ENCODE measurements at regions of chr2 and their contacts with region 1.

Region 1: GRCh38 chr2:96760036-96760985 is at the start of gene CNNM4:
- DNase-seq: peak; percentile 61
- ATAC-seq: peak; percentile 86
- H3K4me3 ChIP-seq: peak within 1 kb of the TSS; percentile 91
- H3K27ac ChIP-seq: peak within 1 kb of the TSS; percentile 67
- H3K4me1 ChIP-seq: peaks cover 9% of the 10 kb centered on the region
- H3K27me3 ChIP-seq: no peaks in the 10 kb centered on the region
- CTCF ChIP-seq: peak in 1 of 3 experiments; percentile 45; a peak in 2 of 6 replicates
- EP300 ChIP-seq: no peak
- POLR2A ChIP-seq: peak; percentile 84
- RAD21 ChIP-seq: no peak
- polyA plus RNA-seq, gene CNNM4: 2.4 to 2.8 TPM

Region 2: DNA sequence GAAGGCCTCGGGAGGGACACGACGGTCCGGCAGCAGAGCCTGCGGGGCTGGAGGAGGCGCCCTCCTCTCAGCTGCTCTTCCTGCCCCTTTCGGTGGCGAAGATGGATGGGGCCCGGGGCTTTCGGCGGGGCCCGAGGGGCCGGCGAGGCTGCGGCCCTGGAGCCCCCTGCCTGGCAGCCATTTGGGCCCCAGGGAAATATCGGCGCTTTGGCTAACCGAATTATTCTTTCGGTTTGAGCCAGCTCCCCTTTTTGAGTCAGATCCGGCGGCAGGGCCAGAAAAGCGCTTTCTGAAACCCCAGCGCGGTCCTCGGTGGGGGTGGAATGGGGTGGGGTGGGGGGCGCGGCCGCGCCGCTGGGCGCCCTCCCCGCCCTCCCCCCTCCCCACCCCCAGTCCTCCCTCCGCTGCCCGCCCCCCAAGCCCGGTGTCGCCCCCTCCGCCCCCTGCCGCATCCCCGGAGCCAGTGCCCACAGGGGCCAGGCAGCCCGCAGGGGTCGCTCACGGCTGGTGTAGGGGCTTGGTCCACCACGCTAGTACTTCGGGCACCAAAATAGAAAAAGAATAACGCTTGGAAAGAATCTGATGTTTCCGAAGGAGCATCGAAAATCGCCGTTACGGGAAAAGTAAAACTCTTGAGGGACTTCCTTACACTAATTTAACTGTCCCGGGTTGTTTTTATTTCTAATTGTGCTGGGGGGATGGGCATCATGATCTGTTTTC is 232.9 kb before region 1 on chr2:
- CTCF ChIA-PET with region 1: interaction called, 6 read pairs
- POLR2A ChIA-PET with region 1: no interaction called
- RAD21 ChIA-PET with region 1: interaction called, 10 read pairs
- SMC1A ChIA-PET with region 1: no interaction called
- in situ Hi-C with region 1: no loop called
- intact Hi-C with region 1: loop called (anchors 10 kb)
- DNase-seq: no peak
- ATAC-seq: peak; percentile 67
- H3K4me3 ChIP-seq: peak overlapping the region; percentile 39
- H3K27ac ChIP-seq: peak overlapping the region; percentile 97
- H3K4me1 ChIP-seq: peaks cover 88% of the 10 kb centered on the region
- H3K27me3 ChIP-seq: no peaks in the 10 kb centered on the region
- CTCF ChIP-seq: peak in 2 of 3 experiments; percentile 28 to 32; a peak in 3 of 6 replicates
- EP300 ChIP-seq: peak; percentile 65 to 70; a peak in 3 of 4 replicates
- POLR2A ChIP-seq: peak; percentile 73
- RAD21 ChIP-seq: peak; percentile 34; the same call in 1 of the 2 replicates

Region 3: DNA sequence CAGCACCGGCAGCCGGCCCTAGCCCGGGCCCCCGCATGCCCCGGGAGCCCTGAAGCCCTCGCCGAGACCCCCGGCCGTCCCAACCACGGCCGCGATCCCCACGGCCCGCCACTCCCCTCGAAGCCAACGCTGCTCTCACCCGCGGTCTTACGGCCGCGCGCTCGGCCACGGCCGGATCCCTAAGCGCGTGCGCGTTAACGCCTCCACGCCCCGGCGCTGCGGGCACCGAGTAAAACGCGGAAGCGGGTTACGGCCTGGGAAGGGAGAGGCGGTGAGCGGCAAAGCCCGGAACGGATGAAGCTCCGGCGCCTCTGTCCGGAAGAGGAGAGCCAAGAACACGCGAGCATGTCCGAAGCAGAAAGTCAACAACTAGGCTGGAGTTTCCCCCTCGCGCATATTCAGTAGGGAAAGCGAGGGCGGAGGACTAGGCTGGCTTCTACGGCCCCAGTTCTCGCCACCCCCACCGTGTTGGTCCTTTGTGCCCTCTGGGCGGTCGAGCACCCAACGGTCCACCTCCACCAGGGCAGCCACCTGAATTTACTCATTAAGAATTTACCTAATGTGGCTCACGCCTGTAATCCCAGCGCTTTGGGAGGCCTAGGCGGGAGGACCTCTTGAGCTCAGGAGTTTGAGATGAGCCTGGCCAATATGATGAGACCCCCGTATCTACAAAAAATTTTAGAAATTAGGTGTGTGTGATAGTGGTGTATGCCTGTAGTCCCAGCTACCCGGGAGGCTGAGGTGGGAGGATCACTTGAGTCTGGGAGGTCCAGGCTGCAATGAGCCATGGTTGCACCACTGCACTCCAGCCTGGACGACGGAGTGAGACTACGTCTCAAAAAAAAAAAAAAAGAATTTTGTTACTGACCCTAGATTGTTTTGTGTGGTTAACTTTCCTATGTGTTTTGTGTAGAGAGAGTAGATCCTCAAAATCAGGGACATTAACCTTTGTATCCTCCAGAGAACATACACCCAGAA is 121.9 kb before region 1 on chr2 and contains the start of gene KANSL3:
- CTCF ChIA-PET with region 1: interaction called, 25 read pairs
- POLR2A ChIA-PET with region 1: interaction called, 10 read pairs
- RAD21 ChIA-PET with region 1: interaction called, 12 read pairs
- SMC1A ChIA-PET with region 1: interaction called, 10 read pairs
- in situ Hi-C with region 1: no loop called
- intact Hi-C with region 1: loop called (anchors 1 kb)
- DNase-seq: peak; percentile 64
- ATAC-seq: peak; percentile 76
- H3K4me3 ChIP-seq: peak within 1 kb of the TSS; percentile 89
- H3K27ac ChIP-seq: peak within 1 kb of the TSS; percentile 84
- H3K4me1 ChIP-seq: no peaks in the 10 kb centered on the region; the same call in 1 of the 2 replicates
- H3K27me3 ChIP-seq: no peaks in the 10 kb centered on the region
- CTCF ChIP-seq: no peak
- EP300 ChIP-seq: peak in 1 of 2 experiments; percentile 66; a peak in 1 of 4 replicates
- POLR2A ChIP-seq: peak; percentile 99
- RAD21 ChIP-seq: no peak
- polyA plus RNA-seq, gene KANSL3: 5.6 to 6.6 TPM

Region 4: DNA sequence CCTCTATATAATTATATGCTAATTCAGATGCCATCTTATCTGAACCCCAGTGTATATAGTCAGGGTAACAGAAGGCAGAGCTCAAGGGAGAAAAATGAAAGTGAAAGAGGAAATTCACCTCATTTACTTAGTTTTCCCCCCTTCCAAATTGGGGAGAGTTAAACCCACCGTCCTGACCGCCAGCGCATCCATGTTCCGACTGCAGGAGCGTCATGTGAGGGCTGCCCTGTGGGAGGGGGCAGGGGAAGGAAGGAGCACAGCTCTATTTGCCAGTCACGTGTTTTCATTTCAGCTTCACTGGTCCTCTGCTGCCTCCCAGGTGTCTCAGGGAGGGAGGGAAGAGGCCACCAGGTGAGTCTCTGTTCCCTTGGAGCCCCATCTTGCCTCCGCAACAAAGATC is 13.6 kb after region 1 on chr2:
- CTCF ChIA-PET with region 1: interaction called, 153 read pairs
- POLR2A ChIA-PET with region 1: interaction called, 88 read pairs
- RAD21 ChIA-PET with region 1: interaction called, 92 read pairs
- SMC1A ChIA-PET with region 1: interaction called, 100 read pairs
- in situ Hi-C with region 1: no loop called
- intact Hi-C with region 1: loop called (anchors 2 kb)
- DNase-seq: no peak
- ATAC-seq: peak; percentile 66
- H3K4me3 ChIP-seq: peak overlapping the region; percentile 54
- H3K27ac ChIP-seq: peak overlapping the region; percentile 71
- H3K4me1 ChIP-seq: peaks cover 52% of the 10 kb centered on the region
- H3K27me3 ChIP-seq: no peaks in the 10 kb centered on the region
- CTCF ChIP-seq: no peak; a peak in 1 of 6 replicates
- EP300 ChIP-seq: no peak
- POLR2A ChIP-seq: peak; percentile 25; the same call in 1 of the 2 replicates
- RAD21 ChIP-seq: no peak

Region 5: GRCh38 chr2:96801005-96801785 is 40.9 kb after region 1 on chr2:
- CTCF ChIA-PET with region 1: interaction called, 42 read pairs
- POLR2A ChIA-PET with region 1: interaction called, 3 read pairs
- RAD21 ChIA-PET with region 1: interaction called, 15 read pairs
- SMC1A ChIA-PET with region 1: interaction called, 16 read pairs
- in situ Hi-C with region 1: no loop called
- intact Hi-C with region 1: loop called (anchors 2 kb)
- DNase-seq: no peak
- ATAC-seq: peak; percentile 98
- H3K4me3 ChIP-seq: no peak overlapping the region
- H3K27ac ChIP-seq: no peak overlapping the region
- H3K4me1 ChIP-seq: peaks cover 18% of the 10 kb centered on the region
- H3K27me3 ChIP-seq: no peaks in the 10 kb centered on the region
- CTCF ChIP-seq: peak; percentile 90 to 93 (median 91)
- EP300 ChIP-seq: no peak
- POLR2A ChIP-seq: no peak
- RAD21 ChIP-seq: peak; percentile 82

Region 6: GRCh38 chr2:96856776-96857673 is 96.7 kb after region 1 on chr2:
- CTCF ChIA-PET with region 1: interaction called, 20 read pairs
- POLR2A ChIA-PET with region 1: interaction called, 10 read pairs
- RAD21 ChIA-PET with region 1: interaction called, 15 read pairs
- SMC1A ChIA-PET with region 1: interaction called, 6 read pairs
- in situ Hi-C with region 1: no loop called
- intact Hi-C with region 1: no loop called
- DNase-seq: no peak
- ATAC-seq: peak; percentile 5
- H3K4me3 ChIP-seq: peak overlapping the region; percentile 99
- H3K27ac ChIP-seq: peak overlapping the region; percentile 86
- H3K4me1 ChIP-seq: peaks cover 3% of the 10 kb centered on the region; the same call in 1 of the 2 replicates
- H3K27me3 ChIP-seq: no peaks in the 10 kb centered on the region
- CTCF ChIP-seq: no peak
- EP300 ChIP-seq: no peak
- POLR2A ChIP-seq: no peak
- RAD21 ChIP-seq: no peak